Endothelial cell of umbilical vein (primary cell): ENCODE measurements at regions of chr5 and their contacts with region 1.

Region 1: DNA sequence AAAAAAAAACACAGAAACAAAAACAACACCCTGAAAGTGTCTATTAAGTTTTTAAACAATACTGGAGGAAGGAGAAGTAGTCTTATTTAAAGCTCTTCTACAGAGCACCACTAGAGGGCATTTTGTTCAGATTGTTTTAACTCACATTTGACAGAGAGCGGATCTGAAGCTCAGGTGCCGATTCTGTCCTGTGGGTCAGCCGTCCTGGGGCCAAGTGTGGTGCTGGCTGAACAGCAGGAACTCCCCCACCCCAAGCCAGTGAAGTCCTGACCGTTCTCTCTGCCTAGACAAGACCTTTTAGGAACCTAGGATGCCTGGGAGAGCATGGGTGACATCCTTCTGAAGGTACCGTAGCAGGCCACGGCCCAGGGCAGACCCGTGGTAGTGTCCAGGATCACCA is 3.9 kb downstream of the EXOC3 start:
- DNase-seq: peak; percentile 32
- H3K4me3 ChIP-seq: no peak overlapping the region
- H3K27ac ChIP-seq: no peak overlapping the region
- H3K4me1 ChIP-seq: peaks cover 10% of the 10 kb centered on the region
- H3K27me3 ChIP-seq: no peaks in the 10 kb centered on the region
- CTCF ChIP-seq: peak; percentile 46 to 56
- POLR2A ChIP-seq: no peak

Region 2: DNA sequence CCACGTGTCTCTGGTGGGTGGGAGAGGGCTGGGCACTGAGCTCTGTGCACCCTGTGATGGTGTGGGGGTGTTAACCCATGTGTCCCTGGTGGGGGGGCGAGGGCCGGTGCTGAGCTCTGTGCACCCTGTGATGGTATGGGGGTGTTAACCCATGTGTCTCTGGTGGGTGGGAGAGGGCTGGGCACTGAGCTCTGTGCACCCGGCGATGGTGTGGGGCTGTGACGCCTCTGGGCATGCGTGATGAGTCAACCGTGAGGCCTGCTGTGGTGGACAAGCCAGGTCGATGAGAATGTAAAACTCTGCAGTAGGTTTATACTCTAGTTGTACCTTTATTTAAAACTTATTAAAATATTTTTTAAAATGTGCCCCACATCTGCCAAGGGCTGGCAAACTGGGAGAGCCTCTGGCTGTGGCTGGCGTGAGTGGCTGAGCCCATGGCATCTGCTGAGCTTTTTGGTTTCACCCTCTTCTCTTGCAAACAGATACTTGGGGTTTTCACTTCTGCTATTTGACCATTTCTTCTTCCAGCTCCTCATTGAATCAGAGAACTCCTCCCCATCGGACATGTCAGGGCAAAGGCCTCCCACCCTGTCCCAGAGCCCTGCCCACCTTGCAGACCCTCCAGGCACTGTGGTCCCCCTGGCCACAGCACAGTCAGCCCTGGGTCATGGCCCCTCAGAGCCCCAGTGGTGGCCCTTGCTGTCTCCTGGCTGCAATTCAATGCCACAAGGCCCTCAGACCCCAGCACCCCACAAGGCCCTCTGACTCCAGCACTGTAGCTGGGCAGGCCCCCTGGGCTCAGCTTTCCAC is 22.4 kb before region 1 on chr5:
- CTCF ChIA-PET with region 1: interaction called, 11 read pairs
- POLR2A ChIA-PET with region 1: no interaction called
- dilution Hi-C with region 1: no loop called
- intact Hi-C with region 1: no loop called
- DNase-seq: no peak
- H3K4me3 ChIP-seq: no peak overlapping the region
- H3K27ac ChIP-seq: no peak overlapping the region
- H3K4me1 ChIP-seq: no peaks in the 10 kb centered on the region
- H3K27me3 ChIP-seq: no peaks in the 10 kb centered on the region
- CTCF ChIP-seq: no peak
- POLR2A ChIP-seq: no peak

Region 3: GRCh38 chr5:431001-431710 is 15.7 kb before region 1 on chr5:
- CTCF ChIA-PET with region 1: interaction called, 16 read pairs
- POLR2A ChIA-PET with region 1: no interaction called
- dilution Hi-C with region 1: no loop called
- intact Hi-C with region 1: no loop called
- DNase-seq: peak; percentile 50
- H3K4me3 ChIP-seq: no peak overlapping the region
- H3K27ac ChIP-seq: no peak overlapping the region
- H3K4me1 ChIP-seq: no peaks in the 10 kb centered on the region
- H3K27me3 ChIP-seq: no peaks in the 10 kb centered on the region
- CTCF ChIP-seq: peak; percentile 79 to 92
- POLR2A ChIP-seq: no peak

Region 4: DNA sequence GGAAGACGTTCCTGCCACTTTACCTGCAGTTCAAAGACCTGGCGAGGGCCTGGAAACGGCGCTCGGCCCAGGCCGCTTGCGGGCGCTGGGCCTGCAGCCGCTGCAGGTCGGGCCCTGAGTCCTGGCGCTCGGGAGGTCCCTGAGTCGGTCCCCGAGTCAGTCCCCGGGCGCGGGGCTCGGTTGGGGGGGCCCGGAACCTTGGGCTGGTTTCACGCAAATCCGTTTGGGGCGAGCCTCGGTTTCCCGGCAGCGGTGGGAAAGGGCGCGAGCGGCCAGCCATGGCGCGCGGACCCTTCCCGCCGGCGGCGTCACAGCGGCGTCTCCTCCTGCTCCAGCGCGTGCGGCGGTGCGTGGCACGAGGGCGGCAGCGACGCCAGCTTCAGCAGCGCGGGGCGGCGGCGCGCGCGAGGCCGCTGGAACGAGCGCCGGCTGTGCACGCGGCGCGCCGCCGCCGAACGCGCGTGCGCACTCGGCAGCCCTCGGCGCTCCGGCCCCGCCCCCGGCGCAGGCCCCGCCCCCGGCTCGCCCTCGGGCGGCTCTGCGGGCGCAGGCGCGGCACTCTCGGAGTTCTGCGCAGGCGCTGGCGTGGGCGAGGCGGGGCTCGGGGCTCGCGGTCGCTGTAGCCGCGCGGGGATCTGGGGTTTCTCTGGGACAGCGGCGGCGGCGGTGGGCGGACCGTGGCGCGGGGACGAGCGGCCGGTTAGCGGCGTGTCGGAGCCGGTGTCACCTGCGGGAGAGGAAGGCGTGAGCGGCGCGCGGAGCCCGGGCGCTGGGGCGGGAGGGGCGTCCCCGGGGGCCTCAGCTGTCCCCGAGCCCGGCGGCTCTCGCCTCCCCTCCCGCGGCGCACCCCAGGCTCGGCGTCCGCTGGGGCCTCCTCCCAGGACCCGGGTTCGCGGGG is 26.0 kb after region 1 on chr5:
- CTCF ChIA-PET with region 1: interaction called, 23 read pairs
- POLR2A ChIA-PET with region 1: no interaction called
- dilution Hi-C with region 1: no loop called
- intact Hi-C with region 1: no loop called
- DNase-seq: peak; percentile 75
- H3K4me3 ChIP-seq: peak overlapping the region; percentile 49 to 79 (median 55)
- H3K27ac ChIP-seq: peak overlapping the region; percentile 82
- H3K4me1 ChIP-seq: peaks cover 6% of the 10 kb centered on the region
- H3K27me3 ChIP-seq: peaks cover 5 to 10% of the 10 kb centered on the region in 2 experiments
- CTCF ChIP-seq: no peak
- POLR2A ChIP-seq: peak; percentile 63

Region 5: DNA sequence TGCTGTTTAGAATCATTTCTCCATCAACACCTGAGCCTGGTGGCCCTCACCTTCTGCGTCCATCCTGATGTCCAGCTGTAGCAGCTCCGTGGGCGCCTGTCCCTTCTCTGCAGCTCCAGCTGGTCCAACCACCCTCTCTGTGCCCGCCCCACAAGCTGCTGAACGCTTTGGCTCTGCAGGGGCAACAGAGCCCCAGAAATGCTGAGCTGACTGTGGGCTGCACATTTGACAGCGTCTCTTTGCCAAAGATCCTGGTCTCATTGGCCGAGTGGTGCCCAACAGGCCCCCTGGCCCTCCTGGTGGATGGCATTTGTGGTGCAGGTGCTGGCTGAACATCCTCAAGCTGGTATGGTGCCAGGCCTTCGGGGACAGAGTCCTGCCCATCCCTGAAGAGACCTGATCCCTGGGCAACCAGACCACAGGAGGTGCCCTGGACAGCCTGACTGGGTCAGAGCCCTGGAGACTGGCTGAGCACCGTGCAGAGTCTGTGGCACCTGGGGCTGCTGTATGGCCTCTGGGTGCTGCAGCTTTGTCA is 140.0 kb after region 1 on chr5:
- CTCF ChIA-PET with region 1: no interaction called
- POLR2A ChIA-PET with region 1: no interaction called
- dilution Hi-C with region 1: no loop called
- intact Hi-C with region 1: no loop called
- DNase-seq: no peak
- H3K4me3 ChIP-seq: no peak overlapping the region
- H3K27ac ChIP-seq: no peak overlapping the region
- H3K4me1 ChIP-seq: no peaks in the 10 kb centered on the region
- H3K27me3 ChIP-seq: peaks cover 0 to 3% of the 10 kb centered on the region in 2 experiments
- CTCF ChIP-seq: no peak
- POLR2A ChIP-seq: no peak

Region 6: DNA sequence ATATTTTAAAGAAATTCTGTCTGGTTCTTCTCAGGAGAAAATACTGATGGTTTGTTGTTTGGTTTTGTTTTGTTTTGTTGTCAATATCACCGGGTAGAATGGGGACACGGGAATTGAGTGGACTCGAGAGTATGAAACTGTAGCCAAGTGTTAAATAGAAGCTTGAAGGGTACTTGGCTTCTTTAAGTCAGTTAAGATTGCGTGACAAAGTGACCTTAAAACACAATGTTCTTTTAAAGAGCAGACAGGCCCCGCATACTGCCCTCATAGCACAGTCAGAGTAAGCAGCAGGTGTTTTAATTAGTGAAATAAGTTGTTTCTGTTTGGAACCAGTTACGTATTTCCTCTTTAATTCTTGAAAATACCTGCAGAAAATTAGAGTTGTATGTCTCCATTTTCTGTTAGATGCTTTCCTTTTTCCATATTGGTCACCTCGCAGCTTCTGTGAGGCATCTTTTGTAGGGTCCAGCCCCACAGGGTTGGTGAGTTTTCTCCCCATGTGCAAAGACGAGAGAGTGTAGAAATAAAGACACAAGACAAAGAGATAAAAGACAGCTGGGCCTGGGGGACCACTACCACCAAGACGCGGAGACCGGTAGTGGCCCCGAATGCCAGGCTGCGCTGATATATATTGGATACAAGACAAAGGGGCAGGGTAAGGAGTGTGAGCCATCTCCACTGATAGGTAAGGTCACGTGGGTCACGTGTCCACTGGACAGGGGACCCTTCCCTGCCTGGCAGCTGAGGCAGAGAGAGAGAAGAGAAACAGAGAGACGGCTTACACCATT is 455.5 kb after region 1 on chr5:
- CTCF ChIA-PET with region 1: interaction called, 28 read pairs
- POLR2A ChIA-PET with region 1: no interaction called
- dilution Hi-C with region 1: no loop called
- intact Hi-C with region 1: no loop called
- DNase-seq: no peak
- H3K4me3 ChIP-seq: no peak overlapping the region
- H3K27ac ChIP-seq: no peak overlapping the region
- H3K4me1 ChIP-seq: no peaks in the 10 kb centered on the region
- H3K27me3 ChIP-seq: no peaks in the 10 kb centered on the region
- CTCF ChIP-seq: no peak
- POLR2A ChIP-seq: no peak